Sigmoid colon (tissue), 7 donors: ENCODE measurements at regions of chr11 and their contacts with region 1.

Region 1: DNA sequence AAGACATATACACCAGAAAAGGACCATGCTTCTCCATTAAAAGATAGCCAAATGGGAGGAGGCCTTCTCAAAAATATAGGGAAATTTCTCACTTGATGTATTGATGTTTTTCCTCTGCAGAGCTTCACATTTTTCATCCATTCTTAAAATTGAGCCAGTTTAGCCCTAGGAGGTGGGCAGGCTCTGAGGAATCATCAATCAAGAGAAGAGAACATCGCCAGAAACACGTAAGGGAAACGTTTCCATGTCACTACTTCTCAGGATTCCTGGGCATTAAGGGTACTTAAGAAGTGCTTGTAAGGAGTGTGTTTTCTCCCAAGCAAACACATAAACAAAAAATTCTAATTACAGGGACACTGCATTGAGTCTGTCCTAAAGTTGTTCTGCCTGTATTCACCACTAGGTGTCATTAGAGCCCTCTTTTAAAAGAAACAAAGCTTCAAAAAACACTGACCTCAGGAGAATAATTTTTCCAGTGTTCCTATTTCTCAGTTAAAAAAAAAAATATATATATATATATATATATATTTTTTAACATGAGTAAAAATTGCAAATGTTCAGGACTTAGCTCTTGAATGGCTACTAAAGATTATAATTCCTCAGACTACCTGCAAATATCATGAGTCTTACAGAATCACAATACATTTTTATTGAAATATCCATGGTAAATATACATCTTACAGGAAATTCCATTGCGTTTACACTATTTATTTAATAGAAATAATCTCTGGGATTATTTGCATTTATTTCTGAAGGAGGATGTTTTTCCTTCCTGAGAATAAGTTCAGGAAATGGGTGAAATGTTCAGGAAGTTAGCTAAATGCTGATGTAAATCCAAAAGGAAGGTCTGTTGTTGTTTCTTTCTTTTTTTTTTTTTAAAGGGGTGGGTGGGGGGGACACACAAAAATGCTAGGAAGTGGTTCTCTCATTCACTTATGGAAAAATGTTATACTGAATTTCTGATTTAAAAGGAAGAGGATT is 16.0 kb downstream of the FZD4 start:
- DNase-seq: no peak
- H3K4me3 ChIP-seq: no peak overlapping the region
- H3K27ac ChIP-seq: peak overlapping the region; percentile 72 to 83 (median 76)
- H3K4me1 ChIP-seq: peaks cover 0 to 76% (median 59%) of the 10 kb centered on the region in 4 donors
- H3K27me3 ChIP-seq: no peaks in the 10 kb centered on the region
- CTCF ChIP-seq: peak; percentile 55 to 79 (median 60)
- EP300 ChIP-seq: no peak
- POLR2A ChIP-seq: no peak

Region 2: DNA sequence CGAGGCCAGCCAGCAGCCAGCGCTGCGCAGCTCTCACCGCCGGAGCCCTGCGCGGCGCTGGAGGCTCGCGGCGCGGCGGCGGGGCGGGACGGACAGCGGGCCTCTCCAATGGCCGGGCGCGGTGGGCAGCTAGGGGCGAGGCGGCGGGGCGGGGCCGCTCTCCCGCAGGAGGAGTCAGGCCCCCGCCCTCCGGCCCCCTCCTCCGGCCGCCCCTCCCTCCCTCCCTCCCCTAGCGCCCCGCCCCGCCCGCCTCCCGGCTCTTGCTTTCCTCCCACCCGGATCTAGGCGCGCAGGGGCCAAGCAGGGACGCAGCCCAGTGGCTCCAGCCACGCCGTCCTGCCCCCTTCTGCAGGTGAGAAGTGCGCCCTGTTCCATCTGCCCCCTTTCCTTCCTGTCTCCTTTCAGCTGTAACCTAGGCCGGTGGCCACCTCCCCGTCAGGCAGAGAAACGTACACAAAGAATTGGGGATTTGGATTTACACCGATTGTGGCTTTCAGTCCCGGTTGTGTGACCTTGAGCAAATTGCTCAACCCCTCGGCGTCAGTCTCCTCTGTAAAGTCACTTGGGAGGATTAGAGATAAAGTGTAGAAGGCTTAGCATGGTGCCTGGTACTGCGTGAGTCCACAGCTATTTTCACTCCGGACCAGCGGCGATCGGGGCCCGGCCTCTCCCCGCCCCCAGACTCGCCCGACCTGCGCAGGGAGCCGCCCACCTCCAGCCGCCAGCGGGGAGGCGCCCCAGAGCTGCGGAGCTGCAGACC is 16.4 kb after region 1 on chr11 and contains the start of gene FZD4:
- intact Hi-C with region 1: loop called (anchors 2 kb)
- DNase-seq: peak; percentile 95
- H3K4me3 ChIP-seq: peak within 1 kb of the TSS; percentile 75 to 100 (median 95)
- H3K27ac ChIP-seq: peak within 1 kb of the TSS; percentile 92 to 98 (median 97)
- H3K4me1 ChIP-seq: peaks cover 0 to 55% (median 40%) of the 10 kb centered on the region in 4 donors
- H3K27me3 ChIP-seq: no peaks in the 10 kb centered on the region
- CTCF ChIP-seq: no peak
- EP300 ChIP-seq: no peak
- POLR2A ChIP-seq: no peak
- total RNA-seq, gene FZD4: 22.9 to 45.7 (median 35.7) TPM

Region 3: DNA sequence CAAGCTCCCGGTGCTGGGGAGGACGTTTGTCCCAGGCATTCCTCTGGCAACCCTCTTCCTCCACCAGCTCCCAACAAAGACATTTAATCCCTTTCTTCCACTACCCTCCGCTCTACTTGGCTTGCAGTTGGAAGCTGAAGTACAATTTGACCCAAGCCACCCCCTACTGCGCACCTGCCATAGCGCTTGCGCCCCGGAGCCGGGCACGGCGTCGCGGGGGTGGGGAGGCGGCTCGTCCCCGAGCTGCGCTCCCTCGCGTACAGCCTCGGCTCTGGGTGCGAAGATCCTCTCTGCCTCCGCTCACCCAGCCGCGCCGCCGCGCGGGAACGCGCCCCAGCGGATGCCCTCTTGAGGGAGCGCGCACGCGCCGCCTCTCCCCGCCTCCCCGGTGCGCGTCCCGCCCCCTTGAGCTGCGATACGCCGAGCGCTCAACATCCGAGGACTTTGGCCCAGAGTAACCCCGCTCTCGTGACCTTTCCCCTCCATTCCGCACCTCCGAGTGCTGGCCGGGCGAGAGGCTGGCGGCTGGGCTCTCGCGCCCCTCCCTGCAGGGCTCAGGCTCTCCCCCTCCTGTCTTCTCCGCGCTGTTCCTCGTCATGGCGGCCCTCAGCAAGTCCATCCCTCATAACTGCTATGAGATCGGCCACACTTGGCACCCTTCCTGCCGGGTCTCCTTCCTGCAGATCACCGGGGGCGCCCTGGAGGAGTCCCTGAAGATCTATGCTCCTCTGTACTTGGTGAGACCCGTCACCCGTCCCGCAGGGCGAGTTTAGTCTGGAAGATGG is 98.5 kb after region 1 on chr11 and contains the start of gene TMEM135:
- intact Hi-C with region 1: loop called (anchors 5 kb)
- DNase-seq: peak; percentile 97
- H3K4me3 ChIP-seq: peak within 1 kb of the TSS; percentile 63 to 85 (median 84)
- H3K27ac ChIP-seq: peak within 1 kb of the TSS; percentile 86 to 89 (median 88)
- H3K4me1 ChIP-seq: peaks cover 0 to 35% (median 13%) of the 10 kb centered on the region in 4 donors
- H3K27me3 ChIP-seq: no peaks in the 10 kb centered on the region
- CTCF ChIP-seq: no peak
- EP300 ChIP-seq: no peak
- POLR2A ChIP-seq: peak; percentile 41 to 49
- total RNA-seq, gene TMEM135: 20.0 to 36.2 (median 28.7) TPM

Region 4: DNA sequence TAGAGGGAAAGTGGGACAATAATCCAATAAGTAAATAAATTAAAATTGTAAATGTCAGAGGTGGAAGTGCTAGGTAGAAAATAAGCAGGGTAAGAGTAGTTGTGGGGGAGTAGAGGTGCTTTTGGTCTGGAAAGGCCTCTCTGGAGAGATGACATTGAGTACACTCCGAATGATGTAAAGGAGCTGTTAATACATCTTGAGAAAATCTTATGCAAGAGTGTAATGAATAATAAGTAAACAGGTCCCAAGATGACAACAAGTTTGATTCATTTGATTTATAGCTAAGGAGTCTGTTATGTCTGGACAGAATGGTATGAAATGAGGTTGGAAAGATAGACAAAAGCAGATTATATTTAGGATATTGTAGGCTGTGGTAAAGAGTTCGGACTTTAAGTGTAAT is 186.1 kb after region 1 on chr11:
- intact Hi-C with region 1: no loop called
- DNase-seq: no peak
- H3K4me3 ChIP-seq: no peak overlapping the region
- H3K27ac ChIP-seq: no peak overlapping the region
- H3K4me1 ChIP-seq: peaks cover 0 to 9% (median 0%) of the 10 kb centered on the region in 4 donors
- H3K27me3 ChIP-seq: no peaks in the 10 kb centered on the region
- CTCF ChIP-seq: no peak
- EP300 ChIP-seq: no peak
- POLR2A ChIP-seq: no peak

Region 5: GRCh38 chr11:87290304-87290922 is 351.2 kb after region 1 on chr11:
- intact Hi-C with region 1: loop called (anchors 1 kb)
- DNase-seq: no peak
- H3K4me3 ChIP-seq: no peak overlapping the region
- H3K27ac ChIP-seq: no peak overlapping the region
- H3K4me1 ChIP-seq: no peaks in the 10 kb centered on the region
- H3K27me3 ChIP-seq: no peaks in the 10 kb centered on the region
- CTCF ChIP-seq: peak; percentile 31 to 74 (median 42)
- EP300 ChIP-seq: no peak
- POLR2A ChIP-seq: no peak

Region 6: DNA sequence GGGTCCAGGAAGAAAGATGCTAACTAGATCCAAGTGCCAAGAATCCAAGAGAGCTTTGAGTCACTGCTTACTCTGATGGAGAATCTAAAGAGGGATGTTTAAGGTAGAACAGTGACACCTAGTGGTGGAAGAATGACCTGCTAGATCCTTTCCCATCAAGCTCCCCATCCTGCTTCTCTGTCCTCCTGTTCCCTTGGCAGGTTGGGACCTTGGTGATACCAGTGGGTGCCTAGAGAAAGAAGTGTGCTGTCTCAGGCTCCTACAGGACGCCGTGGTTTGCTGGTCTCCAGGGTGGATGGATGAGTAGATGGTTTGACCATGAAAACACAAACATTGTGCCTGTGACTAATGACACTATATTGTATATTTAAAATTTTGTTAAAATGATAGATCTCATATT is 482.2 kb after region 1 on chr11:
- intact Hi-C with region 1: loop called (anchors 10 kb)
- DNase-seq: no peak
- H3K4me3 ChIP-seq: no peak overlapping the region
- H3K27ac ChIP-seq: no peak overlapping the region
- H3K4me1 ChIP-seq: no peaks in the 10 kb centered on the region
- H3K27me3 ChIP-seq: no peaks in the 10 kb centered on the region
- CTCF ChIP-seq: peak; percentile 58 to 78 (median 68)
- EP300 ChIP-seq: no peak
- POLR2A ChIP-seq: no peak